ENCODE measurements at regions of chr3 and their contacts with region 1.

Region 1: DNA sequence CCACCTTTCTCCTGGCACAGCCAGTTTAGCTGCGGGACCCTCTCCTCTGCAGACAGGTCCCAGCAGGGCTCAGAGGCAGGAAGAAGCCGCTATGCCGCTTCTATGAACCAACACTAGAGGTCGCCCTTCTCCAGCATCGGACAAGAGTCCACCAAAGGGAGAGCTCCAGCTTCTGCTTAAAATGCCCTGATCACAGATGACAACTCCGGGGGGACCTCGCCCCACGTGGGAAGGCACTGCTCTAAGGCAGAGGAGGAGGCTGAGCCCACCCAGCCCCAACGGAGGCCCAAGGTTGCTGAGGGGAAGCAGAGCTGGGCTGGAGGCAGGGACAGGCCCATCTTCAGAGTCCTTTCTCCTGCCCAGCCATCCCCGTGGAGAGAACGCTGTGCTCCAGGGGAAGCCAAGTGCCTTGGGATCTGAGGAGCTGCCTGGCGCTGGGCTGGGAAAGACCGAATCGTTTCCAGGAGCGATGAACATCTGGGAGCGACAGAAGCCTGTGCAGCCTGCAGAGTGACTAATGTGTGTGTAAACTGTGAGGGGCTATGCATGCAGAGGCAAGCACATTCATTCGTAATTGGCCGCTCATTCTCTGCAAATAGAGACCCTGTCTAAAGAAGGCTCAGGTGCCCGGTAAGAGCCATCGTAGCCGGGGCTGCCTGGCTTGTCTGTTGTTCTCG is 43.5 kb upstream of the BDH1 start:
- DNase-seq: peak; percentile 79 to 86 (median 83)
- ATAC-seq: peak; percentile 99
- H3K4me3 ChIP-seq: no peak overlapping the region
- H3K27ac ChIP-seq: no peak overlapping the region
- H3K4me1 ChIP-seq: peaks cover 10 to 24% of the 10 kb centered on the region in 2 experiments; a peak in 4 of 5 replicates
- H3K27me3 ChIP-seq: no peaks in the 10 kb centered on the region
- CTCF ChIP-seq: peak; percentile 89 to 93 (median 93)
- EP300 ChIP-seq: no peak
- POLR2A ChIP-seq: no peak
- RAD21 ChIP-seq: peak; percentile 77 to 91

Region 2: GRCh38 chr3:197547306-197548011 is 51.8 kb before region 1 on chr3:
- CTCF ChIA-PET with region 1: no interaction called
- POLR2A ChIA-PET with region 1: no interaction called
- in situ Hi-C with region 1: no loop called
- intact Hi-C with region 1: loop called (anchors 5 kb)
- DNase-seq: peak; percentile 37 to 68 (median 53)
- ATAC-seq: peak; percentile 94
- H3K4me3 ChIP-seq: no peak overlapping the region
- H3K27ac ChIP-seq: no peak overlapping the region
- H3K4me1 ChIP-seq: peaks cover 0 to 2% of the 10 kb centered on the region in 2 experiments; a peak in 1 of 5 replicates
- H3K27me3 ChIP-seq: peaks cover 47 to 67% of the 10 kb centered on the region in 2 experiments
- CTCF ChIP-seq: peak; percentile 70 to 80 (median 71)
- EP300 ChIP-seq: no peak
- POLR2A ChIP-seq: no peak
- RAD21 ChIP-seq: peak; percentile 76 to 93

Region 3: GRCh38 chr3:197667978-197668377 is 68.8 kb after region 1 on chr3:
- CTCF ChIA-PET with region 1: no interaction called
- POLR2A ChIA-PET with region 1: no interaction called
- in situ Hi-C with region 1: loop called (anchors 10 kb)
- intact Hi-C with region 1: loop called (anchors 5 kb)
- DNase-seq: peak in 1 of 4 experiments; percentile 9
- ATAC-seq: no peak
- H3K4me3 ChIP-seq: no peak overlapping the region
- H3K27ac ChIP-seq: no peak overlapping the region; the same call in 2 of the 3 replicates
- H3K4me1 ChIP-seq: peaks cover 10 to 12% of the 10 kb centered on the region in 2 experiments; a peak in 4 of 5 replicates
- H3K27me3 ChIP-seq: no peaks in the 10 kb centered on the region
- CTCF ChIP-seq: no peak
- EP300 ChIP-seq: no peak
- POLR2A ChIP-seq: no peak
- RAD21 ChIP-seq: no peak

Region 4: GRCh38 chr3:197674741-197675562 is 75.7 kb after region 1 on chr3:
- CTCF ChIA-PET with region 1: no interaction called
- POLR2A ChIA-PET with region 1: no interaction called
- in situ Hi-C with region 1: loop called (anchors 10 kb)
- intact Hi-C with region 1: no loop called
- DNase-seq: no peak
- ATAC-seq: no peak
- H3K4me3 ChIP-seq: no peak overlapping the region
- H3K27ac ChIP-seq: no peak overlapping the region
- H3K4me1 ChIP-seq: peaks cover 0 to 5% of the 10 kb centered on the region in 2 experiments; a peak in 1 of 5 replicates
- H3K27me3 ChIP-seq: no peaks in the 10 kb centered on the region
- CTCF ChIP-seq: no peak
- EP300 ChIP-seq: no peak
- POLR2A ChIP-seq: no peak
- RAD21 ChIP-seq: no peak

Region 5: GRCh38 chr3:197801891-197802778 is 202.9 kb after region 1 on chr3:
- CTCF ChIA-PET with region 1: no interaction called
- POLR2A ChIA-PET with region 1: no interaction called
- in situ Hi-C with region 1: no loop called
- intact Hi-C with region 1: loop called (anchors 1 kb)
- DNase-seq: peak in 1 of 4 experiments; percentile 46
- ATAC-seq: peak; percentile 60
- H3K4me3 ChIP-seq: no peak overlapping the region
- H3K27ac ChIP-seq: no peak overlapping the region
- H3K4me1 ChIP-seq: peaks cover 7 to 19% of the 10 kb centered on the region in 2 experiments; a peak in 3 of 5 replicates
- H3K27me3 ChIP-seq: no peaks in the 10 kb centered on the region
- CTCF ChIP-seq: peak; percentile 41 to 70 (median 51); a peak in 5 of 6 replicates
- EP300 ChIP-seq: no peak
- POLR2A ChIP-seq: no peak
- RAD21 ChIP-seq: peak; percentile 26 to 57; a peak in 3 of 4 replicates

Region 6: DNA sequence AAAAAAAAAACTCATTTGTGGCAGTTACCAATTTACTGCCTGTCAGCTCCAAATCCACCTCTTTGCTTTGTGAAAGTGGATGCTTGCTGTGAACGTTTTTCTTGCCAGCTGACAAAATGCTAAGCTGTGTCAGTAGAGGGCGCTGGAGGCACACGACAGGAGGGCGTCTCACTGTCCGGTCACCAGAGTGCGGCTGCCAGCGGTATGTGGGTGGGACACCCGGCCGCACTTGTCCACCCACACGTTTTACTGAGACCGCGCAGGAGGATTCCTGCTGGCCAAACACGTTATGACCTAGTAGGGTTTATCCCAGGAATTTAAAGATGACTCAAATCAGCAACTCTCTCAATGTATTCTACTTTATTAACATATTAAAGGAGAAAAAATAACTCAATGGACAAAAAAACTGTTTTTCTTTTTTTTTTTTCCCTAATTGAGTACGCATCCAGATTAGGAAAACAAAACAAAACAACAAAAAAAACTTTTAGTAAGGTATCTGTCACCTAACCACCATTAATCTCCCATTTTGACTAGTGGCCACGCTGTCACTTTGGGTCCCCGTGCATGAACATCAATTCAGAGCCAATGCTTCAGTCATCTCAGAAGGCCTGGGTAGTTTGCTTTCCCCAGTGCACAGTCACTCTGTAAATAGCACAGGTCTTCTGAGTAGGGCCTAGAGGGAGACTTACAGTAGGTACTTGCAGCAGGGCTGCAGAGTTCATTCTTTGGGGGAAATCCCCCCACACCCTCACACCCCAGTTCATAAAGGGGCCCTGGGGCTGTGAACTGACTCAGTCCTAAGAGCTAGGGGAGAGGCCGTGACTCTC is 307.0 kb after region 1 on chr3:
- CTCF ChIA-PET with region 1: no interaction called
- POLR2A ChIA-PET with region 1: no interaction called
- in situ Hi-C with region 1: no loop called
- intact Hi-C with region 1: loop called (anchors 10 kb)
- DNase-seq: peak; percentile 88 to 96 (median 95)
- ATAC-seq: peak; percentile 100
- H3K4me3 ChIP-seq: no peak overlapping the region
- H3K27ac ChIP-seq: no peak overlapping the region
- H3K4me1 ChIP-seq: peaks cover 0 to 6% of the 10 kb centered on the region in 2 experiments; a peak in 2 of 5 replicates
- H3K27me3 ChIP-seq: no peaks in the 10 kb centered on the region
- CTCF ChIP-seq: peak; percentile 96 to 98 (median 96)
- EP300 ChIP-seq: no peak
- POLR2A ChIP-seq: no peak
- RAD21 ChIP-seq: peak; percentile 93 to 95

Measured in K562 (cell line).